ENCODE measurements at regions of chr1 and their contacts with region 1.

Region 1: GRCh38 chr1:8015036-8015808 is 10.9 kb downstream of the ERRFI1 start:
- DNase-seq: no peak
- ATAC-seq: peak; percentile 33
- H3K4me3 Mint-ChIP-seq: no peak overlapping the region
- H3K27ac Mint-ChIP-seq: peak overlapping the region; percentile 87
- H3K4me1 Mint-ChIP-seq: peaks cover 54% of the 10 kb centered on the region
- H3K27me3 Mint-ChIP-seq: no peaks in the 10 kb centered on the region
- CTCF ChIP-seq: peak; percentile 50; the same call in 1 of the 2 replicates

Region 2: GRCh38 chr1:7975212-7975865 is 39.9 kb before region 1 on chr1:
- CTCF ChIA-PET with region 1: interaction called, 52 read pairs
- POLR2A ChIA-PET with region 1: no interaction called
- DNase-seq: peak; percentile 89
- ATAC-seq: peak; percentile 100
- H3K4me3 Mint-ChIP-seq: no peak overlapping the region
- H3K27ac Mint-ChIP-seq: no peak overlapping the region
- H3K4me1 Mint-ChIP-seq: 0 out of 2 replicates have a peak, but pooled peaks cover 2% of the 10 kb centered on the region
- H3K27me3 Mint-ChIP-seq: no peaks in the 10 kb centered on the region
- CTCF ChIP-seq: peak; percentile 88

Region 3: GRCh38 chr1:7991504-7992440 is 23.4 kb before region 1 on chr1:
- CTCF ChIA-PET with region 1: interaction called, 17 read pairs
- POLR2A ChIA-PET with region 1: interaction called, 4 read pairs
- DNase-seq: peak; percentile 87
- ATAC-seq: peak; percentile 99
- H3K4me3 Mint-ChIP-seq: no peak overlapping the region
- H3K27ac Mint-ChIP-seq: peak overlapping the region; percentile 97
- H3K4me1 Mint-ChIP-seq: peaks cover 31% of the 10 kb centered on the region
- H3K27me3 Mint-ChIP-seq: no peaks in the 10 kb centered on the region
- CTCF ChIP-seq: no peak

Region 4: GRCh38 chr1:8026153-8026975 is 11.1 kb after region 1 on chr1 and contains the start of gene ERRFI1:
- CTCF ChIA-PET with region 1: interaction called, 37 read pairs
- POLR2A ChIA-PET with region 1: interaction called, 3 read pairs
- DNase-seq: peak; percentile 94
- ATAC-seq: peak; percentile 84
- H3K4me3 Mint-ChIP-seq: peak within 1 kb of the TSS; percentile 88
- H3K27ac Mint-ChIP-seq: peak within 1 kb of the TSS; percentile 70
- H3K4me1 Mint-ChIP-seq: peaks cover 60% of the 10 kb centered on the region
- H3K27me3 Mint-ChIP-seq: peaks cover 7% of the 10 kb centered on the region
- CTCF ChIP-seq: no peak
- total RNA-seq, gene ERRFI1: 34.5 to 44.6 TPM (median 35.8 TPM) in 3 replicates

Region 5: GRCh38 chr1:8053878-8054567 is 38.8 kb after region 1 on chr1:
- CTCF ChIA-PET with region 1: no interaction called
- POLR2A ChIA-PET with region 1: no interaction called
- DNase-seq: no peak
- ATAC-seq: no peak
- H3K4me3 Mint-ChIP-seq: no peak overlapping the region
- H3K27ac Mint-ChIP-seq: no peak overlapping the region
- H3K4me1 Mint-ChIP-seq: no peaks in the 10 kb centered on the region
- H3K27me3 Mint-ChIP-seq: no peaks in the 10 kb centered on the region
- CTCF ChIP-seq: no peak

Region 6: DNA sequence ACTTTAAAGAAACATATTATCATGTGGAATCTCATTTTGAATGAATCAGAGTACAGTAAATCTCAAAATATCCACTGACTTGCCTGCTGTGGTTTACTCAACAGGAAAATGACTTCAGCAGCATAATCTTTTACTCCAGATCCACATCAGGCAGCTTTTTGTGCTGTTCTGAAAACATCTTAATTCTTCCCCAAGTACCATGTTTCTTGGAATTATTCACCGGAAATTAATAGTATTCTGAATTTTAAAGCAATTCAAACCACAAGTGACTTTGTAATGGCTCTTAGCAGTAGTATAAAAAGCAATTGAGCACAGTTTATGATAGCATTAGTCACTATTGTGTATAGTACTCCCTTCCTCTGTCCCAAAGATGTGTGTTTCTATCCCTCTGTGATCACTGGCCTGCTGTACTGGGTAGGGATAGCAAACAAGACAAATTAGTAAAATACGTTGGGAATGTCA is 75.0 kb after region 1 on chr1:
- CTCF ChIA-PET with region 1: no interaction called
- POLR2A ChIA-PET with region 1: no interaction called
- DNase-seq: no peak
- ATAC-seq: no peak
- H3K4me3 Mint-ChIP-seq: no peak overlapping the region
- H3K27ac Mint-ChIP-seq: no peak overlapping the region
- H3K4me1 Mint-ChIP-seq: no peaks in the 10 kb centered on the region
- H3K27me3 Mint-ChIP-seq: no peaks in the 10 kb centered on the region
- CTCF ChIP-seq: no peak

Region 7: DNA sequence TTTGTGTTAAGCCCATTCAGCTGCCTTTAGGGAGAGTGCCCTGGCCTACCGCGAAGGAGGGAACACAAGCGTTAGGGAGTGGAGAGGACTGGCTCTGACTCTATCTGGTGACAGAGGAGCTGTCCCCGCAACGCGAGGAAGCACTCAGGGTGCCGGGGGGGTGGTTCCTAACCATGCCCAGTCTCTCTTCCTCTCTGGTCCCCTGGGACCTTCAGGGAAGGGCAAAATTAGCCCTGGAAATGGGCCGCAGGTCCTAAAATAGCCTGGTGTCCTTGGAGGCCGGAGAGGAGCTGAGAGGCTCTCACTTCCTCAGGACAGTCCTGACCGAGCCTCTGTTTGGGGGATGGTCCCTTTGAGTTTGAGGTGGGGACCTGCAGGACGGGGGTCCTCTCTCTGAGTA is 308.5 kb after region 1 on chr1:
- CTCF ChIA-PET with region 1: interaction called, 10 read pairs
- POLR2A ChIA-PET with region 1: no interaction called
- DNase-seq: no peak
- ATAC-seq: peak; percentile 24; the same call in 1 of the 2 replicates
- H3K4me3 Mint-ChIP-seq: no peak overlapping the region
- H3K27ac Mint-ChIP-seq: no peak overlapping the region
- H3K4me1 Mint-ChIP-seq: peaks cover 4% of the 10 kb centered on the region
- H3K27me3 Mint-ChIP-seq: peaks cover 11% of the 10 kb centered on the region
- CTCF ChIP-seq: no peak